ENCODE measurements at regions of chr7 and their contacts with region 1.

Region 1: GRCh38 chr7:107168233-107169119 is at the start of gene HBP1:
- DNase-seq: peak; percentile 98
- H3K4me3 Mint-ChIP-seq: peak within 1 kb of the TSS; percentile 89
- H3K27ac Mint-ChIP-seq: peak within 1 kb of the TSS; percentile 96
- H3K4me1 Mint-ChIP-seq: peaks cover 36% of the 10 kb centered on the region
- H3K27me3 Mint-ChIP-seq: peaks cover 15% of the 10 kb centered on the region
- total RNA-seq, gene HBP1: 17.0 and 19.3 TPM in 2 replicates

Region 2: DNA sequence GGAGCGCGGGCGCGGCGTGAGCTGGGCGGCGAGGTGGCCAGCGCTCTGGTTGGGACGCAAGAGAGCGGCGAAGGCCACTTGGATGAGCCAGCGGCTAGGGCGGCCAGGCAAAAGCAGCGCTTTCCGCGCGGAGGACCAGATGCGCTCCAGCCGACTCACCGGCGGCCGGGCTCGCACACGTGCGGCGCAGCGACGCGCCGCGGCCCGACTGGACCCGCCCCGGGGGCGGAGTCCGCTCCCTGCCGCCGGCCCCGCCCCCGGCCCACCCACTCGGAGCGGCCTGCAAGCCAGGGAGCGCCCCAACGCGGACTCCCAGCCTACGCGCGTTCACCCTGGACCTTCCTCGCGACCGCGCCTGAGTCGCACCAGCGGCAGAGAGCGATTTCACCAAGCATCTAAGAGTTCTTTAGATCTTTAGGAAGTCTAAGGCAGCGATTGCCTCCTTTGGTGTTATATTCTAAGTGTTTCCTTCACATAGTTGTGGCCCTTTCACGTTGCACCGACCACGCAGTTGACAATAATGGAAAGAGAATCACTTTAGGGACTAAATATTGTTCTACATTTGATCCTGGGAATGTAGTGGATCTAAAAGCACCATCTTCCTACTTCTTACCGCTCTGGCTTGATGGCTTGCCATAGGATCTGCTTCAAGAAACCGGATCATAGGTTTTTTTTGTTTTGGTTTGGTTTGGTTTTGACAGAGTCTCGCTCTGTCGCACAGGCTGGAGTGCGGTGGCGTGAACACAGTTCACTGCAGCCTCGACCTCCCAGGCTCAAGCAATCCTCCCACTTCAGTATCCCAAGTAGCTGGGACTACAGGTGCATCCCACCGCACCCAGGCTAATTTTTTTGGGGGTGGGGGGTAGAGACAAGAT is 1646.2 kb before region 1 on chr7 and contains the start of gene PUS7:
- intact Hi-C with region 1: loop called (anchors 5 kb)
- DNase-seq: peak; percentile 72
- H3K4me3 Mint-ChIP-seq: peak within 1 kb of the TSS; percentile 94
- H3K27ac Mint-ChIP-seq: peak within 1 kb of the TSS; percentile 91
- H3K4me1 Mint-ChIP-seq: peaks cover 16% of the 10 kb centered on the region
- H3K27me3 Mint-ChIP-seq: no peaks in the 10 kb centered on the region
- total RNA-seq, gene PUS7: 41.8 and 44.4 TPM in 2 replicates

Region 3: DNA sequence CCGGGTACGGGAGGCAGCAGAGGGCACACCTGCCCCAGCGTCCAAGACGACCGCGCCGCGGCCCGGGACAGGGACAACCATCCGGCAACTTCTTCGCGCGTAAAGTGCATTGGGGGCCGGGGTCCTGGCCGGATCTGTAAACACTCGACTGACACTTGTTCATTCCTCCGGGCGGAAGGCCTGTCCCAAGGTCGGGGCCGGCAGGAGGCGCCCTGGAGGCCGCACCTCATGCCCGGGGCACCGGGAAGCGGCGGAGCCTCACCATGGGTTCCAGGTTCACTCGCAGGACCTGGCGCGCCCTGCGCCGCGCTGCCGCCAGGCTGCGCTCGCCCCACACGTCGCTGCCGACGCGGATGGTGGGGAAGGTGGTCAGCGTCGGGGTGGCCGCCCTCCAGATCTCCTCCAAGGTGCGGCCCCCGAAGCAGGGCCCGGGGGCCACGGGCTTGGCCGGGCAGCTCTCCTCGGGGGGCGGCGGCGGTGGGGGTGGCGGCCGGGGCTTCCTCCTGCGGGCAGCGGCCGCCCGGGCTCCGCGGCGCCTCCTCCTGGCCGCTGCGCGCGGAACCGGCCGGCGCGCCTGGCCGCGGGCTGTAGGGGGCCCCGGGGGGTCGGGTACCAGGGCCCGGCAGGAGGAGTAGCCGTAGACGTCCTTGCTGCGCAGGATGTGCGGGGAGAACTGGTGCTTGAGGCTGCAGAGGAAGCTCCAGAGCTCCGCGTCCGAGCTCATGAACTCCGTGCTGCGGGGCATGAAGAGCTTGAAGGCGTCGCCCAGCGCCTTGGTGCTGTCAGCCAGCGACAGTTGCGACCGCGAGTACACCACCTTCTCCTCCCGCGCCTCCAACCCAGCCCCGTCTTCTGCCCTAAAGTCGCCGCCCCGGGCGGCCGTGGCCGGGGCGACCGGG is 508.3 kb before region 1 on chr7:
- intact Hi-C with region 1: loop called (anchors 5 kb)
- DNase-seq: peak; percentile 82
- H3K4me3 Mint-ChIP-seq: peak overlapping the region; percentile 96
- H3K27ac Mint-ChIP-seq: peak overlapping the region; percentile 93
- H3K4me1 Mint-ChIP-seq: peaks cover 33% of the 10 kb centered on the region
- H3K27me3 Mint-ChIP-seq: no peaks in the 10 kb centered on the region

Region 4: DNA sequence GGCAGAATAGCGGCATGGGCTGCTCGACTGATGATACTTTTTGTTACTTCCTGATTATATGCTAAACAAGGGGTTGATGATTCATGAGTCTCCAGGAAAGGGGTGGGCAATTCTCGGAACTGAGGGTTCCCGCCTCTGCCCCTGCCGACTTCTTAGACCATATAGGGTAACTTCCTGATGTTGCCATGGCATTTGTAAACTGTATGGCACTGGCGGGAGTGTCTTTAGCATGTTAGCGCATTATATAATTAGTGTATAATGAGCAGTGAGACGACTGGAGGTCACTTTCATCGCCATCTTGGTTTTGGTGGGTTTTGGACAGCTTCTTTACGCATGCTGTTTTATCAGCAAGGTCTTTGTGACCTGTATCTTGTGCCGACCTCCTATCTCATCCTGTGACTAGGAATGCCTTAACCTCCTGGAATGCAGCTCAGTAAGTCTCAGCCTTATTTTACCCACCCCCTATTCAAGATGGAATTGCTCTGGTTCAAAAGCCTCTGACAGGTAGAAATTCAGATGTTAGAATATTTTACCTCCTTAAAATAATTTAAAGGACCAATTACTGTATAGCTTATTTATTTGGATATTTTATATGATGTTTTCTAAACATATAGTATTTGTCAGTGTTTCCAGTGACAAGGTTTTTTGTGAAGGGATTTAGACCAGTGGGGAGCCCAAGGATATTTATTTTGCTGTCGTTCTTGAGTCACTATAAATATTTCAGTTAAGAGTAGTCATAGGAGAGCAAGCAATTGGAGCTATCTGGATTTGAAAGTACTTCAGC is 393.5 kb before region 1 on chr7:
- intact Hi-C with region 1: loop called (anchors 1 kb)
- DNase-seq: no peak
- H3K4me3 Mint-ChIP-seq: no peak overlapping the region
- H3K27ac Mint-ChIP-seq: peak overlapping the region; percentile 14
- H3K4me1 Mint-ChIP-seq: peaks cover 36% of the 10 kb centered on the region
- H3K27me3 Mint-ChIP-seq: no peaks in the 10 kb centered on the region

Region 5: DNA sequence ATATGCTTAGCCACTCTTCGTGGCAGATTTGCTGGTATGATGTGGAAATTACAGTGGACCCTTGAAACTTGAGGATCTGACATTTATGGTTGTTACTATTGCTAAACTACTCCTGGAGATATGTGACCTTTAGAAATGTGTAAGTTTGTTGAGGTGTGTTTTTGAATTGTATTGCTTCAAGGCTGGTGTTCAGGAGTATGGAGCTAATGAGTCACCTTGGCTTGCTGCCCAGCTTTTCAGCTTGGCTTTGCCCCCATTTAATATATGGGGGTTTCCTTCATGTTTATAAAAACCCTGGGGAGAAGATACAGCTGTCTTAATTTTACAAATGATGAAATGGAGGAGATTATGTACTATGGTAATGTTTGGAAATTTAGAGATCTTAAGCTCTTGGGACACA is 11.9 kb after region 1 on chr7:
- intact Hi-C with region 1: loop called (anchors 1 kb)
- DNase-seq: no peak
- H3K4me3 Mint-ChIP-seq: no peak overlapping the region
- H3K27ac Mint-ChIP-seq: peak overlapping the region; percentile 80
- H3K4me1 Mint-ChIP-seq: peaks cover 18% of the 10 kb centered on the region
- H3K27me3 Mint-ChIP-seq: no peaks in the 10 kb centered on the region

Region 6: DNA sequence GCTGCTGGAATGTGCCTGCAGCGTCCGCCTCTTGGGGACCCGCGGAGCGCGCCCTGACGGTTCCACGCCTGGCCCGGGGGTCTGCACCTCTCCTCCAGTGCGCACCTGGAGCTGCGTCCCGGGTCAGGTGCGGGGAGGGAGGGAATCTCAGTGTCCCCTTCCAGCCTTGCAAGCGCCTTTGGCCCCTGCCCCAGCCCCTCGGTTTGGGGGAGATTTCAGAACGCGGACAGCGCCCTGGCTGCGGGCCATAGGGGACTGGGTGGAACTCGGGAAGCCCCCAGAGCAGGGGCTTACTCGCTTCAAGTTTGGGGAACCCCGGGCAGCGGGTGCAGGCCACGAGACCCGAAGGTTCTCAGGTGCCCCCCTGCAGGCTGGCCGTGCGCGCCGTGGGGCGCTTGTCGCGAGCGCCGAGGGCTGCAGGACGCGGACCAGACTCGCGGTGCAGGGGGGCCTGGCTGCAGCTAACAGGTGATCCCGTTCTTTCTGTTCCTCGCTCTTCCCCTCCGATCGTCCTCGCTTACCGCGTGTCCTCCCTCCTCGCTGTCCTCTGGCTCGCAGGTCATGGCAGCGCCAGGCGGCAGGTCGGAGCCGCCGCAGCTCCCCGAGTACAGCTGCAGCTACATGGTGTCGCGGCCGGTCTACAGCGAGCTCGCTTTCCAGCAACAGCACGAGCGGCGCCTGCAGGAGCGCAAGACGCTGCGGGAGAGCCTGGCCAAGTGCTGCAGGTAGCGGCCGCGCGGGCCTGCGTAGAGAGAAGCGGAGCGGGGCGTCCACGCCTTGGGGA is 492.8 kb after region 1 on chr7:
- intact Hi-C with region 1: loop called (anchors 5 kb)
- DNase-seq: peak; percentile 54
- H3K4me3 Mint-ChIP-seq: peak overlapping the region; percentile 94
- H3K27ac Mint-ChIP-seq: peak overlapping the region; percentile 82
- H3K4me1 Mint-ChIP-seq: peaks cover 39% of the 10 kb centered on the region
- H3K27me3 Mint-ChIP-seq: no peaks in the 10 kb centered on the region

Region 7: DNA sequence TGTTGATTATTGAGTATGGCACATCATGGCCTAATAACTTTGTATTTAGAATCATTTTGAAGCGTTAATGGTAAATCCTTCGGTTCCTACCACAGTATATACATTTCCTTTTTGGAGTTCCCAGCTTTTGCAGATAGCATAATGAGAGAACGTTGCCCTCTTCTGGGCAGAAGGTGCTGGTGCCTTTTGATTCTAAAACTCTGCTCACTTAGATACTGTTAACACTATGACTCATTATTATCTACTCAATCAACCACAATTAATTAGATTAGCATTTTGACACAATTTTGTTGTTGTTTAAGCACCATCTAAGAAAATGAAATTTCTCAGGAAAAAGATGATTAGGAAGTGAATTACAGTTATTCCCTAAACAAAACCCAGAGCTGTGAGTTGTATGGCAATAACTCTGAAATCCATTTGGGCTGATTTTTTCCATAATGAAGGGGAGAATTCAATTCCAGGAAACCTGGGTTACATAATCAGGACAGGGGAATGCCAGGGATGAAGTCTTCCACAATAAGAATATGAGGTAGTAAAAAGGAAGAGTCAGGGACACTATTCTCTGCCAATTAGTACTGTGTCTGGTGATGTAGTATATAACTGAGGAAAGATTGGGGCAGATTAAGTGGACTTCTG is 711.0 kb after region 1 on chr7:
- intact Hi-C with region 1: loop called (anchors 10 kb)
- DNase-seq: no peak
- H3K4me3 Mint-ChIP-seq: no peak overlapping the region
- H3K27ac Mint-ChIP-seq: no peak overlapping the region
- H3K4me1 Mint-ChIP-seq: peaks cover 27% of the 10 kb centered on the region
- H3K27me3 Mint-ChIP-seq: peaks cover 29% of the 10 kb centered on the region

Measured in activated T-helper 2 cell treated with anti-CD3 and anti-CD28 coated beads, Interferon-gamma antibody, Interleukin-2, Interleukin-4, amounts not matched to agents 10 μg/mL and 5 μg/mL and 100 μg/mL, durations not matched to agents 14 hours and 24 hours and 36 hours (primary cell).